ENCODE measurements at regions of chr20 and their contacts with region 1.

Region 1: GRCh38 chr20:50285376-50286173 is 94.9 kb downstream of the CEBPB start:
- DNase-seq: no peak
- ATAC-seq: no peak
- H3K4me3 ChIP-seq: no peak overlapping the region
- H3K27ac ChIP-seq: no peak overlapping the region
- H3K4me1 ChIP-seq: peaks cover 66% of the 10 kb centered on the region
- H3K27me3 ChIP-seq: no peaks in the 10 kb centered on the region
- CTCF ChIP-seq: no peak
- EP300 ChIP-seq: no peak
- POLR2A ChIP-seq: no peak
- RAD21 ChIP-seq: no peak

Region 2: DNA sequence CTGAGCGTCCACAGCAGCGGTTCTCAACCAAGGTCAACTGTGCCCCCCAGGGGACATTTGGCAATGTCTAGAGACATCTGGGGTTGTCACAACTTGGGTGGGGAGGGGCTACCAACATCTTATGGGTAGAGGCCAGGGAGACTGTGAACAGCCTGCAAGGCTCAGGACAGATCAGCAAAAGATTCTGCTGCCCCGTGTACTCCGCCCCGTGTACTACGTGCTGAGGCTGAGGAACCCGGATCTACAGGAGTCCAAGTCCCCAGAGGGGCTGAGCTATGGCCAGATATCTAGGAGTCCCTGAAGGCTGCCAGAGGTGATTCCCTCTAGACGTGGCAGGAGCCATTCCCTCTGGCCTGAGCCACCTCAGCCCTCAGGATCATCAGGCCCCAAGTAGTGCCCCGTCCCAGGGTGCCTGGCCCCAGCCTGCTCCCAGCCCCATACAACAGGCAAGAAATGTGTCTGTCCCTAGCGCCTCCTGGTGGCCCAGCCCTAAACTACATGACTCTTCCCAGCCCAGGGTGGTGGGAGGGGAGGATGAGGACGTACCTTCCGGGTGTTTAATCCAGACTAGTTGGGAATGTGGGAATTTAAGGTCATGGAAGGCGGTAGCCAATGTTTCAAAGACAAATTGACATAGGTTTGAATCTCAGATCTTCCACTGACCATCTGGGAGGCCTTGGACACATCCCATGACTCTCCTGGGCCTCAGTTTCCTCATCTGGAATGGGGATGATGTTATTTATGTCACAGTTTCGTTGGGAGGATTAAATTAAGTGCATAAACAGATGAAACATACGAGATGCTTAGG is 175.1 kb after region 1 on chr20:
- CTCF ChIA-PET with region 1: interaction called, 19 read pairs
- POLR2A ChIA-PET with region 1: interaction called, 4 read pairs
- in situ Hi-C with region 1: loop called (anchors 5 kb)
- intact Hi-C with region 1: no loop called
- DNase-seq: peak; percentile 91
- ATAC-seq: peak; percentile 85
- H3K4me3 ChIP-seq: peak overlapping the region; percentile 15 to 64 (median 35); a peak in 5 of 6 replicates
- H3K27ac ChIP-seq: peak overlapping the region; percentile 45
- H3K4me1 ChIP-seq: peaks cover 89% of the 10 kb centered on the region
- H3K27me3 ChIP-seq: no peaks in the 10 kb centered on the region
- CTCF ChIP-seq: peak; percentile 100
- EP300 ChIP-seq: peak in 1 of 2 experiments; percentile 60; a peak in 3 of 4 replicates
- POLR2A ChIP-seq: peak in 1 of 2 experiments; percentile 28; a peak in 1 of 4 replicates
- RAD21 ChIP-seq: peak; percentile 100